ENCODE measurements at regions of chr10 and their contacts with region 1.

Region 1: DNA sequence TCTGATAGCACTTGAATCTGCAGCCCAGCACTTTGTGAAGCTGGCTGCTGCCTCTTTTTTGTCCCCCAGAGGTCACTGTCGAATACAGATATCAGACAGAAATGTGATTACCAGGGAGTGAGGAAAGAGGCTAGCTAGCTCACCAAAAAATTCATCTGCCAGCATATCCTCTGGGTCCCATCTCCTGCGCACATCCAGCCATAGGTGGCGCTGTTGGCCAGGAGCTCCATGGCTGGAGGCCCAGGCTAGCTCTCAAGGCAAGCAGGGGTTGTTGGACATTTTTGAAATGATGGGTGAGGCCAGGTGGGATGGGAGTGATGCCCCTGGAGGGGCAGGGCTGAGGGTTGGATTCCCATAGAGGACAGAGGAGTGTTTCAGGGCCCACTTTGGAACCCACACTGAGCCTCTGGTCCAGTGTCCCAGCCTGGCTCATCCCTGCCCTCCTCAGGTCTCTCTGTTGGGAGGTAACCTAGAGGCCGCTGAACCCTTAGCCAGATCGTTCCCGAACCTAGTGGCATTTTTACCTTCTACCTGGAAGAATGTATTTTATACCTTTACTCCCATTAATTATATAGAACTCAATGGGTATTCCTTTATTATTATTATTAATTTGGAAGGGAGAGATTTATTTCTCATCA is 14.8 kb downstream of the DPCD start:
- DNase-seq: peak; percentile 40 to 71
- ATAC-seq: peak; percentile 67 to 77 (median 69)
- H3K4me3 ChIP-seq: no peak overlapping the region
- H3K4me3 Mint-ChIP-seq: no peak overlapping the region
- H3K27ac ChIP-seq: no peak overlapping the region
- H3K27ac Mint-ChIP-seq: no peak overlapping the region
- H3K4me1 ChIP-seq: no peaks in the 10 kb centered on the region
- H3K4me1 Mint-ChIP-seq: no peaks in the 10 kb centered on the region
- H3K27me3 ChIP-seq: no peaks in the 10 kb centered on the region
- H3K27me3 Mint-ChIP-seq: no peaks in the 10 kb centered on the region
- CTCF ChIP-seq: peak; percentile 63

Region 2: DNA sequence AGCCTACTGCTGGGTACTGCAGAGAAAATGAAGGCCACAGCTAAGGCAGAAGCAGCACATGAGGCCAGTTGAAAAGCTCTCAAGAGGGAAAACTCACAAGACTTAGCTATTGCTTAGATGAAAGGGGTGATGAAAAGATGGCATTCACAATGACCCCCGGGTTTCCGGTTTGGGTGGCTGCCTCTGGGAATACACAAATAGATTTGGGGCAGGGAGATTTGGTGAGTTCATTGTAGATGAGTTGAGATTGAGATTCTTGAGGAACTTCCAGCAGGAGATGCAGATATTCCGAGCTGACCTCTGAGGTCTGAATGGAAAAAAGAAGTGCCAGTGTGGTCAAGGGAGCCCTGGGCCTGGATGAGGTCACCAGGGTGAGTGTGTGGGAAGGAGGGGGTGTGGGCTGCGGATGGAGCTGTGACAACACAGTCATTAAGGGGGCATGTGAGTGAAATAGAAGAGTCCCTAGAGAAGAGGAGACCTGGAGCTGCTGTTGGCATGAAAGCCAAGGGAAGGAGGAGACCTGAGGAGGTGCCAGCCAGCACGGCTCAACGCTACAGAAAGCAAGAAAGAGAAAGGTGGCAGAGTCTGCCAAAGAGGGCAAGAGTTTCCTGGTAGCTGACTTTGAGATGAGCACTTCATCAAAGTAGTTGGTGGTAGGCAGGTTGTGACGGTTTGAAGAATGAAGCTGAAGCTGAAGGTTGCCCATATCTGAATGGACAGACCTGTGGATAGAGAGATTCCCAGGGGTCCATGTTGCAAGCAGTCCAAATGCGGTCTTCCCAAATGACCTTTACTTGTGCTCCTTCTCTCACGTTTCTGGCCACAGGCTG is 1023.4 kb before region 1 on chr10:
- intact Hi-C with region 1: no loop called
- DNase-seq: no peak
- ATAC-seq: no peak
- H3K4me3 ChIP-seq: no peak overlapping the region
- H3K4me3 Mint-ChIP-seq: no peak overlapping the region
- H3K27ac ChIP-seq: no peak overlapping the region
- H3K27ac Mint-ChIP-seq: no peak overlapping the region
- H3K4me1 ChIP-seq: no peaks in the 10 kb centered on the region
- H3K4me1 Mint-ChIP-seq: no peaks in the 10 kb centered on the region
- H3K27me3 ChIP-seq: peaks cover 3% of the 10 kb centered on the region
- H3K27me3 Mint-ChIP-seq: peaks cover 27 to 52% of the 10 kb centered on the region in 2 donors
- CTCF ChIP-seq: no peak

Region 3: GRCh38 chr10:101772017-101772894 is 169.4 kb after region 1 on chr10:
- intact Hi-C with region 1: no loop called
- DNase-seq: no peak
- ATAC-seq: no peak
- H3K4me3 ChIP-seq: no peak overlapping the region
- H3K4me3 Mint-ChIP-seq: no peak overlapping the region
- H3K27ac ChIP-seq: no peak overlapping the region
- H3K27ac Mint-ChIP-seq: no peak overlapping the region
- H3K4me1 ChIP-seq: peaks cover 9% of the 10 kb centered on the region
- H3K4me1 Mint-ChIP-seq: peaks cover 0 to 20% of the 10 kb centered on the region in 2 donors
- H3K27me3 ChIP-seq: peaks cover 28% of the 10 kb centered on the region
- H3K27me3 Mint-ChIP-seq: peaks cover 49 to 50% of the 10 kb centered on the region in 2 donors
- CTCF ChIP-seq: no peak

Region 4: DNA sequence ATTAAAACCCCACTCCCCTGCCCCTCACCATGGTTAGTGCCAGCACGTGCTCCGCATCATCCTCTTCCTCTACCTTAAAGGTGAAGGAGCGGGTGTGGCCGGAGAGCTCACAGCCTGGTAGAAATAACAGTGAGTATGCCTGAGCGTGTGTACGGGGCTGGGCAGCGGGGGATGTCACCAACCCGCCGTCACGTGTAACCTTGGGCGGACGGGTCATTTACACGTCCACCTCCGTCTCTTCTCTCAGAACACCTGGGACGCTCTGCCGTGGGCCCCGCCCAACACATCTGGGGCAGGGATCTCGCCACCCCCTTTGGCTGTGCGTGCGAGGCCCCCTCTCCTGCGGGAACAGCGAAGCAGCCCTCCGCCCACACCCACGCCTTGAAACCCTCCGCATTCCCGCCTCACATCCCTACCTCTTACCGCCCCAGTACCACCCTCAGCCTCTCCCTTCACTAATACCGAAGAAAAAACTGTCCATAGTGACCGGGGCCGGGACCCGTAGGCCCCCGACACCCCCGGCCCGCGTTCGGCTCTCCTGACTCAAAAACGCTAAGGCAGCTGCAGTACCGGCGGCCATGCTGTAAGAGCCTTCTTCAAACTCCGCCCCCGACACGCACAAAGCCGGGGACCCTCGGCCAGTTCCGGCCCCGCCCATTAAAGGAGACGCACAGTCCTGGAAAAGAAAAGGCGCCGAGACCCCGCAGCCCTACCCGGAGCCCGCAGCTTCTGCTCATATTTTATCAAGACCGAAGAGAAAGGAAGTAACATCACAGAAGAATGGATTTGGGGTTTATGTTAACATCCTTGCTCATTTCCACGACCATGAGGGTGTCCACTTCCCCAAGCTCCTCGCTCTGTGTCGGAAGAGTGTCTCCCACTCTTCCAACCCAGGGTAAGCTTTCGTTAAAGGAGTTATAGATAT is 180.2 kb after region 1 on chr10 and contains the start of gene NPM3:
- intact Hi-C with region 1: loop called (anchors 2 kb)
- DNase-seq: peak; percentile 75 to 86
- ATAC-seq: peak; percentile 78 to 83 (median 82)
- H3K4me3 ChIP-seq: peak within 1 kb of the TSS; percentile 77
- H3K4me3 Mint-ChIP-seq: peak within 1 kb of the TSS; percentile 100
- H3K27ac ChIP-seq: peak within 1 kb of the TSS; percentile 70
- H3K27ac Mint-ChIP-seq: peak within 1 kb of the TSS; percentile 93 to 96
- H3K4me1 ChIP-seq: peaks cover 55% of the 10 kb centered on the region
- H3K4me1 Mint-ChIP-seq: peaks cover 55 to 58% of the 10 kb centered on the region in 2 donors
- H3K27me3 ChIP-seq: peaks cover 9% of the 10 kb centered on the region
- H3K27me3 Mint-ChIP-seq: peaks cover 7 to 11% of the 10 kb centered on the region in 2 donors
- CTCF ChIP-seq: no peak
- total RNA-seq, gene NPM3: 8.2 to 9.0 (median 8.5) TPM

Measured in natural killer cell (primary cell).